PC-9 (cell line): ENCODE measurements at regions of chr1 and their contacts with region 1.

Region 1: DNA sequence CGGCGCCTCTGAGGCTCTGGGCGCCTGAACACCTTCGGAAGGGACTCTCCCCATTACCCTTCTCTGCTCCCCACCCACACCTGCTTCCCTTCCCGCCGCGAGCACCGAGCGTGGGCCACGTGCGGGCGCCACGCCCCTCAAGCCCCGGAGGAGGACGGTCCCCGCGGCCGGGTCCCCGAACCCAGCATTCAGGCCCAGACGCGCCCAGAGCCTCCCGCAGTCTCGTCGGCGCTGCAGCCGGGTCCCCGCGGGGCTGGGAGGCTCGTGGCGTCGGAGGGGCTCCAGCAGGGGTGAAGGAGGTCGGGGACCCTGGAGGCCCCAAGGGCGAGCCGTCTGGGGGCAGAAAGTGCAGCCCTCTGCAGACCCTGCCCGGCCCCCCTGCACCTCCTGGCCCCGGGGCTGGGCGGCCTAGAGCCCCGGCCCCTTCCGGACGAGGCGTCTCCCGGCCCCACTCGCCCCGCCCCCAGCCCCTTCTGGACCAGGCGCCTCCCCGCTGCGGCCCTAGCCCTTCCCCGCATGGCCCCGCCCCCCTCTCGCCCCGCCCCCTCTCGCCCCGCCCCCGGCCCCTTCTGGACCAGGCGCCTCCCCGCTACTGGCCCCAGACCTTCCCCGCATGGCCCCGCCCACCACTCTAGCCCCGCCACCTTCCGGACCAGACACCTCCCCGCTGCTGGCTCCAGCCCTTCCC is 378 bp upstream of the SMIM1 start:
- DNase-seq: peak; percentile 63 to 91
- H3K4me3 ChIP-seq: peak overlapping the region; percentile 66
- H3K27ac ChIP-seq: no peak overlapping the region
- H3K4me1 ChIP-seq: no peaks in the 10 kb centered on the region
- H3K27me3 ChIP-seq: peaks cover 6% of the 10 kb centered on the region; the same call in 1 of the 2 replicates
- CTCF ChIP-seq: no peak

Region 2: GRCh38 chr1:5551274-5551975 is 1779.3 kb after region 1 on chr1:
- CTCF ChIA-PET with region 1: no interaction called
- POLR2A ChIA-PET with region 1: no interaction called
- intact Hi-C with region 1: loop called (anchors 10 kb)
- DNase-seq: peak in 1 of 2 experiments; percentile 52
- H3K4me3 ChIP-seq: no peak overlapping the region
- H3K27ac ChIP-seq: no peak overlapping the region
- H3K4me1 ChIP-seq: no peaks in the 10 kb centered on the region
- H3K27me3 ChIP-seq: no peaks in the 10 kb centered on the region
- CTCF ChIP-seq: no peak